ENCODE measurements at regions of chr5 and their contacts with region 1.

Region 1: GRCh38 chr5:151463137-151464029 is 16.0 kb downstream of the SLC36A1 start:
- DNase-seq: peak in 1 of 2 experiments; percentile 83
- H3K4me3 ChIP-seq: no peak overlapping the region
- H3K27ac ChIP-seq: no peak overlapping the region
- H3K4me1 ChIP-seq: no peaks in the 10 kb centered on the region
- H3K27me3 ChIP-seq: no peaks in the 10 kb centered on the region
- CTCF ChIP-seq: peak; percentile 81 to 85 (median 82)
- EP300 ChIP-seq: no peak
- POLR2A ChIP-seq: no peak
- RAD21 ChIP-seq: peak; percentile 53 to 76

Region 2: GRCh38 chr5:151315998-151316597 is 147.3 kb before region 1 on chr5:
- CTCF ChIA-PET with region 1: interaction called, 10 read pairs
- POLR2A ChIA-PET with region 1: no interaction called
- DNase-seq: peak in 1 of 2 experiments; percentile 85
- H3K4me3 ChIP-seq: no peak overlapping the region
- H3K27ac ChIP-seq: no peak overlapping the region
- H3K4me1 ChIP-seq: peaks cover 0 to 2% (median 0%) of the 10 kb centered on the region in 4 experiments; a peak in 2 of 7 replicates
- H3K27me3 ChIP-seq: no peaks in the 10 kb centered on the region
- CTCF ChIP-seq: peak; percentile 81 to 90 (median 89)
- EP300 ChIP-seq: no peak
- POLR2A ChIP-seq: no peak
- RAD21 ChIP-seq: peak; percentile 74 to 87

Region 3: DNA sequence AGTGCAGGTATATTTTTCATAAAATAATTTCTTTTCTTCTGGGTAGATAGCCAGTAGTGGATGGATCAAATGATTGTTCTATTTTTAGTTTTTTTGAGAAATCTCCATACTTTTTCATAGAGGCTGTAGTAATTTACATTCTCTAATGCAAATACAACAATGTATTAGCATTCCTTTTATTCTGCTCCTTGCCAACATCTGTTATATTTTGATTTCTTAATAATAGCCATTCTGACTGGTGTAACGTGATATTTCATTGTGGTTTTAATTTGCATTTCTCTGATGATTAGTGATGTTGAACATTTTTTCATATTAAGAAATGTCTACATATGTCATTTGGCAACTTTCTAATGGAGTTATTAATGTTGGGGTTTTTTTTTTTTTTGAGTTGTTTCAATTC is 88.8 kb before region 1 on chr5:
- CTCF ChIA-PET with region 1: no interaction called
- POLR2A ChIA-PET with region 1: no interaction called
- DNase-seq: no peak
- H3K4me3 ChIP-seq: no peak overlapping the region
- H3K27ac ChIP-seq: no peak overlapping the region
- H3K4me1 ChIP-seq: no peaks in the 10 kb centered on the region
- H3K27me3 ChIP-seq: no peaks in the 10 kb centered on the region
- CTCF ChIP-seq: no peak
- EP300 ChIP-seq: no peak
- POLR2A ChIP-seq: no peak
- RAD21 ChIP-seq: no peak

Region 4: GRCh38 chr5:151406322-151406947 is 56.9 kb before region 1 on chr5:
- CTCF ChIA-PET with region 1: interaction called, 10 read pairs
- POLR2A ChIA-PET with region 1: no interaction called
- DNase-seq: no peak
- H3K4me3 ChIP-seq: no peak overlapping the region
- H3K27ac ChIP-seq: no peak overlapping the region
- H3K4me1 ChIP-seq: peaks cover 3 to 12% (median 8%) of the 10 kb centered on the region in 4 experiments; a peak in 6 of 7 replicates
- H3K27me3 ChIP-seq: no peaks in the 10 kb centered on the region
- CTCF ChIP-seq: peak; percentile 41 to 75 (median 42); a peak in 3 of 4 replicates
- EP300 ChIP-seq: no peak
- POLR2A ChIP-seq: no peak
- RAD21 ChIP-seq: peak in 1 of 2 experiments; percentile 7; a peak in 2 of 4 replicates

Region 5: GRCh38 chr5:151490627-151491026 is 27.2 kb after region 1 on chr5:
- CTCF ChIA-PET with region 1: interaction called, 13 read pairs
- POLR2A ChIA-PET with region 1: interaction called, 6 read pairs
- DNase-seq: no peak
- H3K4me3 ChIP-seq: no peak overlapping the region
- H3K27ac ChIP-seq: no peak overlapping the region
- H3K4me1 ChIP-seq: peaks cover 0 to 4% (median 0%) of the 10 kb centered on the region in 4 experiments; a peak in 1 of 7 replicates
- H3K27me3 ChIP-seq: no peaks in the 10 kb centered on the region
- CTCF ChIP-seq: no peak
- EP300 ChIP-seq: no peak
- POLR2A ChIP-seq: no peak
- RAD21 ChIP-seq: no peak

Region 6: GRCh38 chr5:151509231-151509630 is 45.8 kb after region 1 on chr5:
- CTCF ChIA-PET with region 1: interaction called, 13 read pairs
- POLR2A ChIA-PET with region 1: no interaction called
- DNase-seq: no peak
- H3K4me3 ChIP-seq: no peak overlapping the region
- H3K27ac ChIP-seq: no peak overlapping the region
- H3K4me1 ChIP-seq: no peaks in the 10 kb centered on the region; a peak in 1 of 7 replicates
- H3K27me3 ChIP-seq: no peaks in the 10 kb centered on the region
- CTCF ChIP-seq: no peak
- EP300 ChIP-seq: no peak
- POLR2A ChIP-seq: no peak
- RAD21 ChIP-seq: no peak